PC-9 (cell line): ENCODE measurements at regions of chr18 and their contacts with region 1.

Region 1: GRCh38 chr18:741931-742512 is 29.6 kb upstream of the ENOSF1 start:
- DNase-seq: peak in 1 of 2 experiments; percentile 36
- H3K4me3 ChIP-seq: no peak overlapping the region
- H3K27ac ChIP-seq: no peak overlapping the region
- H3K4me1 ChIP-seq: no peaks in the 10 kb centered on the region
- H3K27me3 ChIP-seq: no peaks in the 10 kb centered on the region
- CTCF ChIP-seq: peak; percentile 91

Region 2: DNA sequence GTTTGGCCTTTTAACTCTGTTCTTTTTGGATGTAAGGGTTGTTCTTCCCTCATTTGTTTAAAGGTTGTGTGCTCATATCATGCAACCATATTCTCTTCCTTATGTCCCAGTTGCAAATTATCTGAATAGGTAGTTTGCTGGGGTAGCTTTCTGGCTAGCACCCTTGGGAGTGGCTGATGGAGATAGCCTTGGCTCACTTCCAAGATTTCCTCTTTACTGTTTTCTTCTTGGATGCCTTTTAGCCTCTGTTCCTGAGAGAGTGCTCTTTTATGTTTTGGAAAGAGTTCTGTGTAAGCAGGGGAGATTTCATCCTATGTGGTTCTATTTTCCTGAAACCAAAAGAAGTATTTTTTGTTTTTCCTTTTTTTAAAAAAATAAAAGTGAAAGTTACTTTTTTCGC is 558.3 kb before region 1 on chr18:
- CTCF ChIA-PET with region 1: no interaction called
- POLR2A ChIA-PET with region 1: no interaction called
- intact Hi-C with region 1: no loop called
- DNase-seq: no peak
- H3K4me3 ChIP-seq: no peak overlapping the region
- H3K27ac ChIP-seq: no peak overlapping the region
- H3K4me1 ChIP-seq: no peaks in the 10 kb centered on the region
- H3K27me3 ChIP-seq: no peaks in the 10 kb centered on the region
- CTCF ChIP-seq: no peak

Region 3: GRCh38 chr18:830315-830901 is 88.4 kb after region 1 on chr18:
- CTCF ChIA-PET with region 1: interaction called, 6 read pairs
- POLR2A ChIA-PET with region 1: interaction called, 3 read pairs
- intact Hi-C with region 1: loop called (anchors 1 kb)
- DNase-seq: no peak
- H3K4me3 ChIP-seq: no peak overlapping the region
- H3K27ac ChIP-seq: no peak overlapping the region
- H3K4me1 ChIP-seq: no peaks in the 10 kb centered on the region
- H3K27me3 ChIP-seq: no peaks in the 10 kb centered on the region
- CTCF ChIP-seq: no peak

Region 4: DNA sequence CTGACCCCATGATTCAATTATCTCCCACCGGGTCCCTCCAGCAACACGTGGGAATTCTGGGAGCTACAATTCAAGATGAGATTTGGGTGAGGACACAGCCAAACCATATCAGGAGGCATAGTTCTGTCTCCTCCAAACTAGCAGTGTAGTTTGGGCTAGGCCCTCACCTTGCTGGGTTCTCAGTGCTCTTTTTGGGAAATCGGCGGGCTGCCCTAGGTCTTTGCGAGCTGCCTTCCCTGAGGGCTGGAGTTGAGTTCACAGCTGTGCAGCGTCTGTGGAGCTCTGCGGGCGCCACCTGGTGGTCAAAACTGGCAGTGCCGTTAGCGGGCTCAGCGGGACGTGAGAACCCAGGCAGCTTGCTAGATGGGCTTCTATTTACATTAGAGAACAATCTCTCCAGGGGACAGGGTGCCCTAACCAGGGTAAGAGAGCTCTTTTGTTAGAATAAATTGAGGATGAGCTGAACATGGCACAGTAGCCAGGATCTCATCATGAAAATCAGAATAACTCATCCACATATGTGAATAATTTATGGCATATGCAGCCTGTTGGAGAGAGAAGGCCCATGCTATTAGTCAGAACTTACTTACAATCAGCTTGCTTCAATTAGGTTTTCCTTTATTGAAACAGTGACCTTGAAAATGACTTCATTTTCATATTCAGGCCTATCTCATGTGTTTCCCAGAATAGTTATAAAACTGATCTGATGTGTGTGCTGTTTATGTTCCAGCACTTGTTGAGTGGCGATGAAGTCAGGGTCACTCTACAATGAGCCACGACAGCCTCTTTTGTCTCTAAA is 97.4 kb after region 1 on chr18:
- CTCF ChIA-PET with region 1: interaction called, 3 read pairs
- POLR2A ChIA-PET with region 1: no interaction called
- intact Hi-C with region 1: loop called (anchors 2 kb)
- DNase-seq: peak; percentile 49 to 76
- H3K4me3 ChIP-seq: no peak overlapping the region
- H3K27ac ChIP-seq: no peak overlapping the region
- H3K4me1 ChIP-seq: no peaks in the 10 kb centered on the region
- H3K27me3 ChIP-seq: no peaks in the 10 kb centered on the region
- CTCF ChIP-seq: peak; percentile 93